OCI-LY7 (cell line): ENCODE measurements at regions of chr7 and their contacts with region 1.

Region 1: DNA sequence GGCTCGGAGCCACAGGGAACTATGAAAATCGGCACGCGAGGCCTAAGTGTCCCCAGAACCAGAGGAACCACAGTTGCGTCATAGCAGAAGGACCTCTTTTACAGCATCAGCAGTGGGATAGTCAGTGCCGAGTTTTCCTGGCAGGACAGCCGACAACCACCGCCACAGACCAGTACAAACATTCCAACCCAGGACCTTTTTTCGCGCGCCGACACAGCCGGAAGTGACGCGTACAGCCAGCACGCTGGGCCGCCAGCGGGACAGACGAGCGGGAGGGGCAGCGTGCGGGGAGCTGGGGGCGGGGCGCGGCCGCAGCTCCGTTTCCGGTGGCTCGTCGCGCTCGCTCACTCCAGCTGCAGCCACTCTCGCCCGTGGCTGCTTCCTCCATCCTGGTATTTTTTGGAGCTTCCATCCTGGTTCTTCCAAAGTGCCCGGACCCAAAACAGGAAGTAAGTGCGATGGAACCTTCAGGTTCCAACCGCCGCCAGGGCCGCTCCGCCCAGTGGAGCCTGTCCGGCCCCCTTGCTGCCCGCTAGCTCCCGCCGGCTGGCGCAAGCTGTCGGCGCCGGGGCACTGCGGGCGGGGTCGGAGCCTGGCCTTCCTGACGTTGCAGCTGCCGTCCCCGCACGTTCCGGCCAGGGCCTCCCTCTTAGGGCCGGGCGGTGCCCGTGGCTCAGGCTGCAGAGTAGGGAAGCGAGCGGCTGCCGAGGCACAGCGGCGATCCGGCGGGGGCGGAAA is at the start of gene DMTF1:
- DNase-seq: peak; percentile 93
- H3K4me3 ChIP-seq: peak within 1 kb of the TSS; percentile 93
- H3K27ac ChIP-seq: peak within 1 kb of the TSS; percentile 81
- H3K4me1 ChIP-seq: peaks cover 46% of the 10 kb centered on the region
- CTCF ChIP-seq: no peak
- total RNA-seq, gene DMTF1: 111 and 123 TPM in 2 replicates

Region 2: DNA sequence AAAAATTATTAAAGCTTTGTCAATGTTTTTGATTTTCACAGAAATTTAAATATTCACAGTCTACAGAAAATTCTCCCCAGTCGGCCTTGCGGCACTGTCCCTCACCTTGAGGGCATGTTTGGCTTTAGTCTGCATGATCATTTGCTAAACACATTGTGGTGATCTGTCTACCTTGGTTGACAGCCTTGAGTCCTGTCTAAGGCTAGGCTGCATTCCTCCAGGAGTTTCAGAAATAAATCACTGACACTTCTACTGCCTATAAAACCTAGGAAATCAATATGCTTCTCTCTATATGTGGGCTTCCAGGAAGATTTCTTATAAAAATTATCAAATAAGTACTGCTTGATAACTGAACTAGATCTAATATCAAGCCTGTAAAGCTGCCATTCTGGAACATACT is 939.3 kb before region 1 on chr7:
- CTCF ChIA-PET with region 1: no interaction called
- POLR2A ChIA-PET with region 1: interaction called, 3 read pairs
- intact Hi-C with region 1: loop called (anchors 5 kb)
- DNase-seq: no peak
- H3K4me3 ChIP-seq: no peak overlapping the region
- H3K27ac ChIP-seq: no peak overlapping the region
- H3K4me1 ChIP-seq: peaks cover 23% of the 10 kb centered on the region
- CTCF ChIP-seq: no peak

Region 3: DNA sequence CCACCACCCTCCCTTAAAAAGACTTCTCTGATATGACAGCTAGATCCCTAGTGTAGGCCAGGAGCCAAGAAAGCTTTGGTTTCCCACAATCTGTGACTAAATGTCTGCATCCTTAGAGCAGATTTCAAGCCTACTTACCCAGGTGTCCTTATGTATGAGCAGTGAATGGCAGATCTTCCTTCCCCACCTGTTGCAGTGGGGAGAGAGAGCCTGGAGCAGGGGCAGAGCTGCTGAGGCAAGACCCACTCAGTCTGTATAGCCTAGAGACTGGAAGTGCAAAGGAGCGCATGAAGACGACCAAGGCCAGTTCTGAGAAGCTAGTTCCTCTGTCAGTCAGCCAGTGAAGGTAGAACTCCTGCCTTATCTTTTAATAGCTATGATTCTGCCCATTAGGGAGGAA is 328.5 kb before region 1 on chr7:
- CTCF ChIA-PET with region 1: no interaction called
- POLR2A ChIA-PET with region 1: no interaction called
- intact Hi-C with region 1: no loop called
- DNase-seq: no peak
- H3K4me3 ChIP-seq: no peak overlapping the region
- H3K27ac ChIP-seq: no peak overlapping the region
- H3K4me1 ChIP-seq: no peaks in the 10 kb centered on the region
- CTCF ChIP-seq: no peak

Region 4: DNA sequence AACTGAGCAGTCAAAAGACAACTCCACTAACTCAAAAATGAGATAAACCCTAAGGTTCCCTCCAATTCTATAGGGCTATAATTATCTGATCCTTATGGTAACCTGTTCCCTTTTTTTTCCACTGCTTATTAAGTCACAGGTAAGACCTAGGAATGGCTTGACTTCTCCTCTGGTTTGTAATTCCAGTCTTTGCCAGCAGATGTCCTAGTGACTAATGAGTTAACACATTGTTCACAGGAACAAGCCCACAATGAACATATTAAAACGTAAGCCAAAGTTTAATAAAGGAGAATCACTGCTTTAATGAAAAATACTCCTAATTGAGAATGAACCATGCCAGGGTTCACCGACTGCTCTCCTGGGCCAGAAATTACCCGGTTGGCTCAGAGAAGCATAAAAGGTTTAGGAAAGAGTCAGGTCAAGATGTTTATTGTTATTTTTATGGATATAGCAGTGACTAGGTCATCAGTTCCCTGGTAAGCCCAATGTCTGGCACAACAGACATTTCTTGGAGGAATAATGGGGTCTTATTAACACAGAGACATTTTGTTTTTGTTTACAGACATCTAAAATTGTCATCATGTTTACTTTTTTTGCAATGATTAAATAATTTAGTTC is 213.0 kb before region 1 on chr7:
- CTCF ChIA-PET with region 1: no interaction called
- POLR2A ChIA-PET with region 1: interaction called, 4 read pairs
- intact Hi-C with region 1: loop called (anchors 1 kb)
- DNase-seq: peak; percentile 73
- H3K4me3 ChIP-seq: no peak overlapping the region
- H3K27ac ChIP-seq: no peak overlapping the region
- H3K4me1 ChIP-seq: no peaks in the 10 kb centered on the region
- CTCF ChIP-seq: peak; percentile 84

Region 5: GRCh38 chr7:87173471-87173870 is 21.2 kb after region 1 on chr7:
- CTCF ChIA-PET with region 1: interaction called, 3 read pairs
- POLR2A ChIA-PET with region 1: interaction called, 137 read pairs
- intact Hi-C with region 1: no loop called
- DNase-seq: no peak
- H3K4me3 ChIP-seq: no peak overlapping the region
- H3K27ac ChIP-seq: no peak overlapping the region
- H3K4me1 ChIP-seq: no peaks in the 10 kb centered on the region
- CTCF ChIP-seq: no peak

Region 6: GRCh38 chr7:87219545-87220025 is 67.3 kb after region 1 on chr7 and contains the start of gene TMEM243:
- CTCF ChIA-PET with region 1: interaction called, 8 read pairs
- POLR2A ChIA-PET with region 1: interaction called, 192 read pairs
- intact Hi-C with region 1: loop called (anchors 1 kb)
- DNase-seq: peak; percentile 92
- H3K4me3 ChIP-seq: peak within 1 kb of the TSS; percentile 82
- H3K27ac ChIP-seq: peak within 1 kb of the TSS; percentile 98
- H3K4me1 ChIP-seq: peaks cover 41% of the 10 kb centered on the region
- CTCF ChIP-seq: peak; percentile 67
- total RNA-seq, gene TMEM243: 116 and 126 TPM in 2 replicates

Region 7: DNA sequence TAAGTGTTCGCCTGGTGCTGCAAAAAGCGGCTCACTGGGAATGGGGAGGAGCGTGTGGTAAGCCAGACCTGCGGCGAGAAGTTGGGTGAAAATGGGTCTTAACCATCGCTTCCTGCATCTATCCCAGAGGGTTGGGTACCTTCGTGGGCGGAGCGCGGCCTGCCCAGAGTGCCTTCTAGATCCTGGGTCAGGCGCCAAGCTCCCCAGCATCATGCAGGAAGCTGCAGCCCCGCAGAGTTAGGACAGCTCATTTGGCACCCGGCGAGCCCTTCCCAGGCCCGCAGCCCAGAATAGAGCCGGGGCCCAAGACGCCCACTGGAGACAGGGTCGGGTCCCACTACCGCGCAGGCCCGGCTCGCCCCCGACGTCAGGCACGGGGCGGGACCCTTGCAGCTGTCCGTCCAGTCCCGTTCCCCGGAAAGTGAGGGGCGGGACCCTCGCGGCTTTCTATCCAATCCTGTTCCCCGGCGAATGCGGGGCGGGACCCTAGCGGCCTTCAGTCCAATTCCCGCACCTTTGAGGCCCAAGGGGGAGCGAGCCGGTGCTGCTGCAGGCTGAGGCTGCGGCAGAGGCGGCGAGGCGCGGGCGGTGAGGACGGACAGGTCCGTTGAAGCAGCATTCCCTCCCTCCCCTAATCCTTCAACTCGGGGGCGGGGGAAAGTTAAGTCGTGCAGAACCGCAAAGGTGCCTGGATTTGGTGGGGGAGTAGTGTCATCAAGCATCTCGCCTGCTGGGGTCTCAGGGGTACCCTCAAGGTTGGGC is 193.1 kb after region 1 on chr7 and contains the start of gene CROT:
- CTCF ChIA-PET with region 1: no interaction called
- POLR2A ChIA-PET with region 1: interaction called, 4 read pairs
- intact Hi-C with region 1: loop called (anchors 5 kb)
- DNase-seq: peak; percentile 95
- H3K4me3 ChIP-seq: peak within 1 kb of the TSS; percentile 74
- H3K27ac ChIP-seq: peak within 1 kb of the TSS; percentile 57
- H3K4me1 ChIP-seq: peaks cover 30% of the 10 kb centered on the region
- CTCF ChIP-seq: no peak
- total RNA-seq, gene CROT: 3.0 and 5.2 TPM in 2 replicates